ENCODE measurements at regions of chr12 and their contacts with region 1.

Region 1: DNA sequence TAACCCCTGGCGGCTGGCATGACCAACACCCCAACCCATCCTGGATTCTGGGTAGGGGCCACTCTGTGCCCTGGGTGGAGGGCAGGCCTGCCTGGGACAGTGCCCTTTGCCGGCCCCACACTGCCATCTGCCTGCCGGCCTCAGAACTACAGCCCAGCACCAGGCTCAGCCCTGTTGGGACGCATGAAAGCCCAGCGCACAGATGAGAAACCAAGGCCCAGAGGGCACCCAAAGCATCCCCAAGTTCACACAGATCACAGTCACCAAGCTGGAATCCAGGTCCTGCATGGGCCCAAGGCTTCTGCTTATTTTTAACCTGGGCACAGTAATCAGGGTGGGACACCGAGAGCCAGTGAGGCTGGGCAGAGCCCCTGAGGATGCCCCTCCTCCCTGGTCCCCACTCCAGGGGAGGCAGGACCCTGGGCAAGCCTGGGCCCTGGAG is 26.2 kb downstream of the RFLNA start:
- DNase-seq: peak; percentile 20 to 55 (median 49)
- H3K4me3 ChIP-seq: no peak overlapping the region
- H3K27ac ChIP-seq: no peak overlapping the region
- H3K4me1 ChIP-seq: no peaks in the 10 kb centered on the region
- H3K27me3 ChIP-seq: peaks cover 0 to 3% (median 0%) of the 10 kb centered on the region in 5 experiments

Region 2: DNA sequence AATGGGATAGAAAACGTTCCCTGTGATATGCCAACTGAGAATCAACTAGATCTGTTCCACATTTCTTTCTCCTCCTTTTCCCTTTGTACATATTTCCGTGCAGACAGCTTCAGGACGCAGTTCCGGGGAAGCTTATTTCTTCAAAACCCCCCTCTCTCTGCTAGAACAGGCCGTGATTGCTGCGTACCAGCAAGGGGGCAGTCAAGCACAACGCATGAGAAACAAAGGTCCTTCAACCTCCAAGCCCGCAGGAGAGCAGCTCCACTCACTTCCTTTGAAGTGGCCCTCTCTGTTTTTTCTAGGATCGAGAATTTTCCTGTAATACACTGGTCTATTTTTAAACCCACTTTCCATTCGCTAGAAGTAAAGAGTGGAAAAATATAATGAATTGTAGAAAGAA is 267.2 kb before region 1 on chr12:
- CTCF ChIA-PET with region 1: interaction called, 18 read pairs
- POLR2A ChIA-PET with region 1: interaction called, 3 read pairs
- DNase-seq: peak; percentile 43 to 68 (median 66)
- H3K4me3 ChIP-seq: no peak overlapping the region
- H3K27ac ChIP-seq: no peak overlapping the region
- H3K4me1 ChIP-seq: peaks cover 0 to 12% (median 5%) of the 10 kb centered on the region in 4 experiments
- H3K27me3 ChIP-seq: no peaks in the 10 kb centered on the region